ENCODE measurements at regions of chr21 and their contacts with region 1.

Region 1: GRCh38 chr21:35840197-35840799 is 220.0 kb downstream of the SETD4 start:
- DNase-seq: peak; percentile 28
- H3K4me3 Mint-ChIP-seq: no peak overlapping the region
- H3K27ac Mint-ChIP-seq: no peak overlapping the region
- H3K4me1 Mint-ChIP-seq: no peaks in the 10 kb centered on the region
- H3K27me3 Mint-ChIP-seq: peaks cover 7% of the 10 kb centered on the region

Region 2: DNA sequence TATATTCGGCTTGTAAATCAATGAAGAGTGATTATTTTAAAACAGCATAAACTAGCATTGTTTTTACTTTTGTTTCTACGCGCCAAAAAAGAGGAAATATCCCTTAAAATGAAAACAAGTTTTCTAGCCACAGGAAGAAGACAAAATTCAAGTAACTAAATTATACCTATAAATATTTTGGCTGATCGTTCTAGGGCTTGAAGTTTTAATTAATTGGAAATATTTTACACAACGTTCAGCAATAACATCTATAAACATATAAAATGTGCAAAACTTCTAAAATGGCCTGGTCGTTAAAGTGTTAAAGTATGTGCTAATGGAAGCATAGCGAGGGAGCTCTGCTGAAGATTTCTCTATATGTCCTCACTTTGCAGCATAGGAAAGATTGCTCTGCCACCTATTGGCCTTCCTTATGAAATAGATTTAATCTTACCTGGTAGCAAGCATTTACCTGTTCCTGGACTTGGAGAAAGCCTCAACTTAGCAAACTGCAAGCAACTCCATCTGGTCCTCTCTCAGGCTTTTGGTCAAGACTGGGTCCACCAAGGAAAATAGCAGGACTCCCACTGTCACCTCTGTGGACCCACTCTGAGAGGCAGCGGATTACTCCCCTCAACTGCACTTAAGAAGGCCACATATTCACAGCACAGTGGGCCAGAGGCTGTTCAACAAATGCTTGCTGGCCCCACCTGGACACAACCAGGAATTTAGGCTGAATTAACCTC is 439.9 kb before region 1 on chr21:
- intact Hi-C with region 1: loop called (anchors 5 kb)
- DNase-seq: peak; percentile 9
- H3K4me3 Mint-ChIP-seq: no peak overlapping the region
- H3K27ac Mint-ChIP-seq: no peak overlapping the region
- H3K4me1 Mint-ChIP-seq: peaks cover 23% of the 10 kb centered on the region
- H3K27me3 Mint-ChIP-seq: no peaks in the 10 kb centered on the region

Region 3: GRCh38 chr21:35658242-35658641 is 182.1 kb before region 1 on chr21:
- intact Hi-C with region 1: loop called (anchors 5 kb)
- DNase-seq: no peak
- H3K4me3 Mint-ChIP-seq: no peak overlapping the region
- H3K27ac Mint-ChIP-seq: no peak overlapping the region
- H3K4me1 Mint-ChIP-seq: peaks cover 21% of the 10 kb centered on the region
- H3K27me3 Mint-ChIP-seq: peaks cover 5% of the 10 kb centered on the region

Region 4: DNA sequence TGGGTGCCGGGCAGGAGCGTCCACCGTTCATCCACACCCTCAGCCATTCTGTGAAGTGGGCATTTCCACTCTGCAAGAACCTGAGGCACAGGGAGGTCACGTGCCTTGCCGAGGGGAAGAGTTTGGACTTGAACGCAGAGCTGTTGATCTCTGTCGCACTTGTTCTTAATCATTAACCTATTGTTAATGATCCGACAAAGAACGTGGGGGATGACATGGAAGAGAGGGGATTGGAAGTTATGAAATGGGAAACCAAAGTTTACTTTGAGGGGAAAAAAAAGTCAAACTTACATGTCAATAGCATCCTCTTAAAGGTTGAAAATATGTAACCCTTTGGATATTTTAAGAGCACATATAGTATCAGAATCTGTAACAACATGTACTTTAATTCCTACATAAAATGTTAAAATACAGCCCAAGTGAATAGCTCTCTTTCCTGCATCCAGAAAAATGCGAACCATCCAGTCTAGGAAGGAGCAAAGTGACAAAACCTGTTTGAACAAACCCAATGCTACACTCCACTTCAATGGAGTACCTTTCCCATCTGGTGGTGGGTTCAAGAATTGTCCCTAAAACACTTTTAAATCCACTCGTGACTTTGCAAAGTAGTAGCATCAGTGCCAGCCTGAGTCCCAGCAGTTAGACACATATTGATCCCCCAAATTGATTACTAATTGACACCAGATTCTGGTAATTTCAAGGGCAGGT is 144.5 kb after region 1 on chr21:
- intact Hi-C with region 1: no loop called
- DNase-seq: no peak
- H3K4me3 Mint-ChIP-seq: no peak overlapping the region
- H3K27ac Mint-ChIP-seq: no peak overlapping the region
- H3K4me1 Mint-ChIP-seq: no peaks in the 10 kb centered on the region
- H3K27me3 Mint-ChIP-seq: no peaks in the 10 kb centered on the region

Region 5: GRCh38 chr21:36028127-36029069 is 188.1 kb after region 1 on chr21:
- intact Hi-C with region 1: loop called (anchors 5 kb)
- DNase-seq: peak; percentile 57
- H3K4me3 Mint-ChIP-seq: no peak overlapping the region
- H3K27ac Mint-ChIP-seq: no peak overlapping the region
- H3K4me1 Mint-ChIP-seq: peaks cover 6% of the 10 kb centered on the region
- H3K27me3 Mint-ChIP-seq: peaks cover 2% of the 10 kb centered on the region

Measured in activated T-helper 1 cell treated with anti-CD3 and anti-CD28 coated beads, Interleukin-12 subunit alpha, Interleukin-12 subunit beta, Interleukin-2, Interleukin-4 antibody, amounts not matched to agents 30 ng/mL and 10 ng/mL and 1 ng/mL, durations not matched to agents 14 hours and 24 hours and 36 hours (primary cell).